WTC11 (cell line): ENCODE measurements at regions of chr22 and their contacts with region 1.

Region 1: DNA sequence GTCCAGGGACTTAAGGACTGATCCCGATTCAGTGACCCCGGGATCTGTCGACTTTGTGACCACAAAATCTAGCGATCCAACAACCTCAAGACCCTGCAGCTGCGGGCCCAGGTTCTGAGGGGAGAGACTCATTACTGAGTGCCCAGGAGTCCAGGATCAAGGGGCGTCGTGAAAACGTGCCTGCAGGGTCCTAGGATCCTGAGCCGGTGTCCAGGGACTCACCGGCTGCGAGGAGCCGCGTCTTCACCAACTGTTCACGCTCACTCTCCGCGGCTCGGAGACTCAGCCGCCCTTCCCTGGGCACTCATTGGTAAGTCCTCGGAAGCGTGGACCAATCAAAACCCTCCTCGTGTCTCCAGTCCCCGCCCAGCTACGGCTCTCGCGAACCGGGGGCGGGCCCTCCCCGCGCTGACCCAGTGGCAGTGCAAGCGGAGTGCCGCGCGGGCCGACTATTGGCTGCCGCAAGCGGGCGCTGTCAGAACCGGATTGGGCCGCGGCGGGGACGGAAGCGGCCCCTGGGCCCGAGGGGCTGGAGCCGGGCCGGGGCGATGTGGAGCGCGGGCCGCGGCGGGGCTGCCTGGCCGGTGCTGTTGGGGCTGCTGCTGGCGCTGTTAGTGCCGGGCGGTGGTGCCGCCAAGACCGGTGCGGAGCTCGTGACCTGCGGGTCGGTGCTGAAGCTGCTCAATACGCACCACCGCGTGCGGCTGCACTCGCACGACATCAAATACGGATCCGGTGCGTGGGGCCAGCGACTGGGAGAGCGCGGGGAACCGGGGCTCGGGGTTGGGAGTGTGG is at the start of gene SDF2L1:
- DNase-seq: peak; percentile 99
- ATAC-seq: peak; percentile 94
- H3K4me3 Mint-ChIP-seq: peak within 1 kb of the TSS; percentile 83
- H3K27ac Mint-ChIP-seq: peak within 1 kb of the TSS; percentile 84
- H3K4me1 Mint-ChIP-seq: peaks cover 16% of the 10 kb centered on the region
- H3K27me3 Mint-ChIP-seq: peaks cover 17% of the 10 kb centered on the region
- CTCF ChIP-seq: no peak
- total RNA-seq, gene SDF2L1: 52.2 to 73.6 TPM (median 57.0 TPM) in 3 replicates

Region 2: GRCh38 chr22:21606775-21607174 is 35.2 kb before region 1 on chr22:
- CTCF ChIA-PET with region 1: interaction called, 10 read pairs
- POLR2A ChIA-PET with region 1: interaction called, 3 read pairs
- DNase-seq: no peak
- ATAC-seq: no peak
- H3K4me3 Mint-ChIP-seq: no peak overlapping the region
- H3K27ac Mint-ChIP-seq: no peak overlapping the region
- H3K4me1 Mint-ChIP-seq: peaks cover 6% of the 10 kb centered on the region; the same call in 1 of the 2 replicates
- H3K27me3 Mint-ChIP-seq: no peaks in the 10 kb centered on the region
- CTCF ChIP-seq: no peak

Region 3: DNA sequence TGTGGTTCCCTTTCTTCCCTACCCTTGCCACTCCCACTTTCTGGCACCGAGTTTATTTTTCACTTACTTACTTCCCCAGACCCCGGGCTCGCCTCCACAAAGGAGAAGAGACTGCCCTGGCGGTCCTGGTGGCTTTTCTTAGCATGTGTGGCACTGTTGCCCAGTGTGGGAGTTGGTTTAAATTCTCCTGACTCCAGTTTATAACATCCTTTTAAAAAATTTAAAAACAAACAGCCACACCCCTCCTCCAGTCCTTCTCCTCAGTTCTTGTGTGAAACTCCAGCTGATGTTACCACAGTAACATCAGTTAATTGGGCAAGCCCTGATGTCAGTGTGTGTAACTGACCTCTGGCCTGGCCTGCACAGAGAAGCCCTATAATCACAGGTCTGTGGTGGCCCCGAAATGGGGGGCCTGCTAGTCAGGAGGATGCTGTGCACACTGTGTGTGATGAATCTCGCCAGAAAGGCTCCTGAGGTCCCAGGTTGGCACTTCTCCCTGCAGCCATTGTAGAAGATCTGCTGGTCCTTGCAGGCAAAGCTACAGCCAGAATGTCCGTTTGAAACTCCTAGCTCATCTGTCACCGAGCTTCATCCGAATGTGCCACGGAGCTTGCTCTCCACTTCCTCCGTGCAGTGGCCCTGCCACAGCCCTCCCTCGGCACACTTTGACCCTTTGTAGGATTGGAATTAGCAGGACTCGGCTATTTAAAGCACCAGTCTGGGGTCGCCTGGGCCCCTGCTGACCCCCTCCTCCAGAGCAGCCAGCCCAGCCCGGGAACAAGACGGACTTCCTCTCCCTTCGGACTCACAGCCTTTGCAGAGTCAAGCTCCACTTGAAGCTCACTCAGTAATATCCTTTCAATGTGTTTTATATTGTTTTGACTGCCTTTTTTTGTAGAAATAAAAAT is 19.7 kb before region 1 on chr22:
- CTCF ChIA-PET with region 1: interaction called, 273 read pairs
- POLR2A ChIA-PET with region 1: interaction called, 3 read pairs
- DNase-seq: no peak
- ATAC-seq: no peak
- H3K4me3 Mint-ChIP-seq: no peak overlapping the region
- H3K27ac Mint-ChIP-seq: peak overlapping the region; percentile 73
- H3K4me1 Mint-ChIP-seq: peaks cover 21% of the 10 kb centered on the region; the same call in 1 of the 2 replicates
- H3K27me3 Mint-ChIP-seq: no peaks in the 10 kb centered on the region
- CTCF ChIP-seq: no peak

Region 4: DNA sequence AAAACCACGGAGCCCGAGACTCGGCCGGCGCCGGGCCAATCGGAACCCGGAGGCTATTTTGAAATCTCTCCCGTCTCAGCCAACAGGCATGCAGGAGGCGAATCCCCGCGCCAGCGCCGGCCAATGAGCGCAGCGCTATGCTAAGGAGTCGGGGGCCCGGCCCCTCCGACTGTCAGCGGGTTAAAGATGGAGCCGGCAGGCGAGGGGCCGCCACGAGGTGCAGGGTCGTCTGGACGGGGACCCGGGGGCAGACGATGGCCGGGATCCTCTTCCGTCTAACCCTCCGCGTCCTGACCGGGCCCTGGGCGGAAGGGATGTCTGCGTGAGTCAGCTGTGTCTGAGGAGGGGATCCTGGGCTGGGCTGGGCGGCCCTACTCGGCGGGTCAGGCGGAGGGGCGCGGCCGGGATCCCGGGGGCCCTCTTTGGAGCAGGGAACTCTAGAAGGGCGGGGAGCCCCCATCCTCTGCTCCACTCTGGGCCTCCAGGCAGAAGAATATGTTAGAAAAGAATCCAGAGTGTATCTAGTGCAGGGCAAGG is 10.1 kb after region 1 on chr22:
- CTCF ChIA-PET with region 1: interaction called, 40 read pairs
- POLR2A ChIA-PET with region 1: interaction called, 11 read pairs
- DNase-seq: peak; percentile 95
- ATAC-seq: peak; percentile 90
- H3K4me3 Mint-ChIP-seq: peak overlapping the region; percentile 92
- H3K27ac Mint-ChIP-seq: no peak overlapping the region
- H3K4me1 Mint-ChIP-seq: peaks cover 29% of the 10 kb centered on the region
- H3K27me3 Mint-ChIP-seq: no peaks in the 10 kb centered on the region
- CTCF ChIP-seq: no peak

Region 5: DNA sequence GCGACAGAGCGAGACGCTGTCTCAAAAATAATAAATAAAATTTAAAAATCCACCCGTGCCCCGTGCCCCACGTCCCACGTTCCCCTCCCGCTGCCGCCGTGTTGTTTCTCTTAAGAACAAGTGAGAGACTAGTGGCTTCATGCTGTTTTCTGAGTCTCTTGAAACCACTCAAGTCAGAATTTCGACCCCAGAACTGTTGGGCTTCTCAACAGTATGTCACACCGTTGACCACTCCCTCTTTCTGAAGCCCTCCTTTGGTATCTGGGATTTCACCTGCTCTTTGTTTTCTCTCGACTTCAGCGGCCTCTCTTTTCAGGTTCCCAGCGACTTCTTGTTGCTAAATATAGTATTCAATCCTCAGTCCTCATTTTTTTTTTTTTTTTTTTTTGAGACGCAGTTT is 24.8 kb after region 1 on chr22:
- CTCF ChIA-PET with region 1: interaction called, 13 read pairs
- POLR2A ChIA-PET with region 1: no interaction called
- DNase-seq: no peak
- ATAC-seq: no peak
- H3K4me3 Mint-ChIP-seq: peak overlapping the region; percentile 97
- H3K27ac Mint-ChIP-seq: peak overlapping the region; percentile 95
- H3K4me1 Mint-ChIP-seq: peaks cover 14% of the 10 kb centered on the region
- H3K27me3 Mint-ChIP-seq: peaks cover 3% of the 10 kb centered on the region
- CTCF ChIP-seq: no peak